B cell (primary cell): ENCODE measurements at regions of chr9 and their contacts with region 1.

Region 1: DNA sequence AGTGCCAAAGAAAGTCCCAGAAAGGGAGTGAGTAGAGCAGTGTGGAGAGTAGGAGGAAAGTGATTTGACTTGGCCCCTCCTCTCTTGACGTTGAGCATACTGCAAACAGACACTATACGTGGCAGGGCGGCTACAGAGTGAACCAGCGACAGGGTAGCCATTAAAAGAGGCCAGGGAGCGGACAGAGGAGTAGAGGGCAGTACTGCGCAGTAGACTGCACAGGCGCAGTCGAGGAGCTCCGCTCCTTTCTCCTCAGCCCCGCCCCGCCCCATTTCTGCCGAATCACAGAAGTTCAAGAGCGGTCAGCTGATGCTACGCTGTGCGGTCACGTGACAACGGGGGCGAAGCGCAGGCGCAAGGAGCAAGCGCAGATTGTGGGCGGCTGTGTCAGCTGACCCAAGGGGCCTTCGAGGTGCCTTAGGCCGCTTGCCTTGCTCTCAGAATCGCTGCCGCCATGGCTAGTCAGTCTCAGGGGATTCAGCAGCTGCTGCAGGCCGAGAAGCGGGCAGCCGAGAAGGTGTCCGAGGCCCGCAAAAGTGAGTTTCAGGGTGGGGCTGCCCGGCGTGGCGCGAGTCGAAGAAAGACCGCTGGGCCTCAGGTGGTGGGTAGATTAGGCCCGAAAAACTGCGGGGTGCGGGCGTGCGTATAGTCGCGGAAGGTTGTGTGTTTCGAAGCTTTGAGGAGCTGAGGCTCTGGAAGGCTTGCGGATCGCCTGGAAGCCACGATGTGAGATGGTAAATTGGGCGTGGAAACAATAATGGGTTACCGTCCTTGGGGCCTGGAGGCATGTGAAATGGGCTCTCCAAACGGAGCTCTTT is at the start of gene ATP6V1G1:
- DNase-seq: peak; percentile 99
- ATAC-seq: peak; percentile 93
- H3K4me3 ChIP-seq: peak within 1 kb of the TSS; percentile 80 to 99 (median 96)
- H3K4me3 Mint-ChIP-seq: peak within 1 kb of the TSS; percentile 98
- H3K27ac ChIP-seq: peak within 1 kb of the TSS; percentile 93
- H3K27ac Mint-ChIP-seq: peak within 1 kb of the TSS; percentile 98
- H3K4me1 ChIP-seq: peaks cover 39 to 50% of the 10 kb centered on the region in 2 donors
- H3K4me1 Mint-ChIP-seq: peaks cover 47% of the 10 kb centered on the region
- H3K27me3 ChIP-seq: no peaks in the 10 kb centered on the region
- H3K27me3 Mint-ChIP-seq: no peaks in the 10 kb centered on the region
- CTCF ChIP-seq: no peak
- total RNA-seq, gene ATP6V1G1: 83.1 and 86.8 TPM in 2 replicates

Region 2: GRCh38 chr9:114397848-114398605 is 189.6 kb before region 1 on chr9:
- CTCF ChIA-PET with region 1: interaction called, 5 read pairs
- POLR2A ChIA-PET with region 1: interaction called, 3 read pairs
- intact Hi-C with region 1: loop called (anchors 1 kb)
- DNase-seq: peak; percentile 98
- ATAC-seq: peak; percentile 76
- H3K4me3 ChIP-seq: peak overlapping the region; percentile 55 to 99 (median 93)
- H3K4me3 Mint-ChIP-seq: peak overlapping the region; percentile 93
- H3K27ac ChIP-seq: peak overlapping the region; percentile 99
- H3K27ac Mint-ChIP-seq: peak overlapping the region; percentile 94
- H3K4me1 ChIP-seq: peaks cover 42 to 54% of the 10 kb centered on the region in 2 donors
- H3K4me1 Mint-ChIP-seq: peaks cover 42% of the 10 kb centered on the region
- H3K27me3 ChIP-seq: no peaks in the 10 kb centered on the region
- H3K27me3 Mint-ChIP-seq: no peaks in the 10 kb centered on the region
- CTCF ChIP-seq: peak; percentile 14

Region 3: GRCh38 chr9:114452219-114453165 is 135.1 kb before region 1 on chr9:
- CTCF ChIA-PET with region 1: interaction called, 7 read pairs
- POLR2A ChIA-PET with region 1: interaction called, 13 read pairs
- intact Hi-C with region 1: loop called (anchors 5 kb)
- DNase-seq: peak; percentile 82
- ATAC-seq: peak; percentile 46
- H3K4me3 ChIP-seq: peak overlapping the region in 3 of 5 experiments; percentile 1 to 44 (median 6)
- H3K4me3 Mint-ChIP-seq: peak overlapping the region; percentile 80
- H3K27ac ChIP-seq: peak overlapping the region; percentile 87 to 92
- H3K27ac Mint-ChIP-seq: peak overlapping the region; percentile 97
- H3K4me1 ChIP-seq: peaks cover 57 to 58% of the 10 kb centered on the region in 2 donors
- H3K4me1 Mint-ChIP-seq: peaks cover 57% of the 10 kb centered on the region
- H3K27me3 ChIP-seq: no peaks in the 10 kb centered on the region
- H3K27me3 Mint-ChIP-seq: no peaks in the 10 kb centered on the region
- CTCF ChIP-seq: no peak

Region 4: GRCh38 chr9:114538241-114538640 is 49.4 kb before region 1 on chr9:
- CTCF ChIA-PET with region 1: interaction called, 34 read pairs
- POLR2A ChIA-PET with region 1: interaction called, 8 read pairs
- intact Hi-C with region 1: loop called (anchors 2 kb)
- DNase-seq: peak; percentile 74
- ATAC-seq: peak; percentile 99
- H3K4me3 ChIP-seq: no peak overlapping the region
- H3K4me3 Mint-ChIP-seq: no peak overlapping the region
- H3K27ac ChIP-seq: peak overlapping the region in 1 of 2 donors; percentile 0
- H3K27ac Mint-ChIP-seq: peak overlapping the region; percentile 38
- H3K4me1 ChIP-seq: peaks cover 8 to 13% of the 10 kb centered on the region in 2 donors
- H3K4me1 Mint-ChIP-seq: peaks cover 27% of the 10 kb centered on the region
- H3K27me3 ChIP-seq: no peaks in the 10 kb centered on the region
- H3K27me3 Mint-ChIP-seq: no peaks in the 10 kb centered on the region
- CTCF ChIP-seq: peak; percentile 68

Region 5: DNA sequence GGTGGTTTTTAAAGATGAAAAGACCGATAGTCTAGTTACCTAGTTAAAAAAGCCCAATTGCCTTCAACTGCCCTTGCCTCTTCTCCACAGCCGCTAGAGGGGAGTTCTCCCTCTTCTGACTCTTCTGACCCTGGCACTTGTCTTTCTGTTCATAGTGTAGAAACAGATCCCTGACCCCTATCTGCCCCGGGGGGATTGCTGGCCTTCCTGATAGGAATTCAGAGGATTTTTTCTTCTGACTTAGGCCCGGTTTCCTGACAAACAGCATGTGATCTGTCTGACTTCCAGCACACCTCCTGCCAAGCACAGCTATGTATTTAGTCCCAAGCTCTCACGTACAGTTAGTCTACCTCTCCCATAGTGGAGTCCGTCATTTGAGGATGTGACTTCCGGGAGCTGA is 18.5 kb after region 1 on chr9:
- CTCF ChIA-PET with region 1: interaction called, 29 read pairs
- POLR2A ChIA-PET with region 1: interaction called, 17 read pairs
- intact Hi-C with region 1: loop called (anchors 1 kb)
- DNase-seq: no peak
- ATAC-seq: no peak
- H3K4me3 ChIP-seq: no peak overlapping the region
- H3K4me3 Mint-ChIP-seq: no peak overlapping the region
- H3K27ac ChIP-seq: no peak overlapping the region
- H3K27ac Mint-ChIP-seq: peak overlapping the region; percentile 53
- H3K4me1 ChIP-seq: peaks cover 41 to 46% of the 10 kb centered on the region in 2 donors
- H3K4me1 Mint-ChIP-seq: peaks cover 50% of the 10 kb centered on the region
- H3K27me3 ChIP-seq: no peaks in the 10 kb centered on the region
- H3K27me3 Mint-ChIP-seq: no peaks in the 10 kb centered on the region
- CTCF ChIP-seq: no peak

Region 6: GRCh38 chr9:114616653-114617520 is 29.3 kb after region 1 on chr9:
- CTCF ChIA-PET with region 1: interaction called, 76 read pairs
- POLR2A ChIA-PET with region 1: interaction called, 17 read pairs
- intact Hi-C with region 1: loop called (anchors 1 kb)
- DNase-seq: peak; percentile 88
- ATAC-seq: peak; percentile 80
- H3K4me3 ChIP-seq: peak overlapping the region in 1 of 5 experiments; percentile 18
- H3K4me3 Mint-ChIP-seq: peak overlapping the region; percentile 79
- H3K27ac ChIP-seq: peak overlapping the region; percentile 81 to 89
- H3K27ac Mint-ChIP-seq: peak overlapping the region; percentile 98
- H3K4me1 ChIP-seq: peaks cover 74 to 94% of the 10 kb centered on the region in 2 donors
- H3K4me1 Mint-ChIP-seq: peaks cover 72% of the 10 kb centered on the region
- H3K27me3 ChIP-seq: no peaks in the 10 kb centered on the region
- H3K27me3 Mint-ChIP-seq: no peaks in the 10 kb centered on the region
- CTCF ChIP-seq: no peak